Naive thymus-derived CD4-positive, alpha-beta T cell (primary cell): ENCODE measurements at regions of chr13 and their contacts with region 1.

Region 1: GRCh38 chr13:78595495-78596398 is 7.6 kb downstream of the POU4F1 start:
- DNase-seq: peak in 1 of 9 donors; percentile 38
- ATAC-seq: no peak
- H3K4me3 ChIP-seq: no peak overlapping the region
- H3K4me3 Mint-ChIP-seq: peak overlapping the region in 8 of 10 donors; percentile 4 to 50 (median 26)
- H3K27ac ChIP-seq: no peak overlapping the region
- H3K27ac Mint-ChIP-seq: peak overlapping the region in 6 of 9 donors; percentile 25 to 81 (median 60)
- H3K4me1 ChIP-seq: no peaks in the 10 kb centered on the region
- H3K4me1 Mint-ChIP-seq: peaks cover 0 to 23% (median 13%) of the 10 kb centered on the region in 7 donors
- H3K27me3 ChIP-seq: peaks cover 68 to 70% of the 10 kb centered on the region in 2 donors
- H3K27me3 Mint-ChIP-seq: peaks cover 85 to 90% (median 87%) of the 10 kb centered on the region in 5 donors

Region 2: DNA sequence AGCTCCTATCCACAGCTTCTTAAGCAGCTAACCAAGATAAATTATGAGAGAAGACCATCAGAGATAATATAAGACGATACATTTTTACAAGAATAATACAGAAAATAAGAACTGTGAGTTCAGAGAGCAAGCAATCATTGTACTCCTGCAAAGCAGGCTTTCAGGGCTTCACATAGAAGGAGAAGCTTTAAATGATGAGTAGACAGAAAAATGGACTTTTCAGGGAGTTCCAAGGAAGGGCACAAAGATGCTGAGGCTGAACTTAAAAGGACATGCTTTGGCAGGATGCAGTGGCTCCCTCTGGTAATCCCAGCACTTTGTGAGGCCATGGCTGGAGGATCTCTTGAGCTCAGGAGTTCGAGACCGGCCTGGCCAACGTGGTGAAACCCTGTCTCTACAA is 151.9 kb before region 1 on chr13:
- CTCF ChIA-PET with region 1: no interaction called
- POLR2A ChIA-PET with region 1: no interaction called
- intact Hi-C with region 1: no loop called
- DNase-seq: no peak
- ATAC-seq: no peak
- H3K4me3 ChIP-seq: no peak overlapping the region
- H3K4me3 Mint-ChIP-seq: no peak overlapping the region
- H3K27ac ChIP-seq: no peak overlapping the region
- H3K27ac Mint-ChIP-seq: no peak overlapping the region
- H3K4me1 ChIP-seq: no peaks in the 10 kb centered on the region
- H3K4me1 Mint-ChIP-seq: no peaks in the 10 kb centered on the region
- H3K27me3 ChIP-seq: peaks cover 0 to 3% of the 10 kb centered on the region in 2 donors
- H3K27me3 Mint-ChIP-seq: no peaks in the 10 kb centered on the region

Region 3: GRCh38 chr13:78609464-78610205 is 13.9 kb after region 1 on chr13:
- CTCF ChIA-PET with region 1: interaction called, 3 read pairs
- POLR2A ChIA-PET with region 1: interaction called, 6 read pairs
- intact Hi-C with region 1: loop called (anchors 1 to 2 kb)
- DNase-seq: no peak
- ATAC-seq: peak; percentile 25
- H3K4me3 ChIP-seq: peak overlapping the region; percentile 29
- H3K4me3 Mint-ChIP-seq: peak overlapping the region; percentile 49 to 84 (median 76)
- H3K27ac ChIP-seq: no peak overlapping the region
- H3K27ac Mint-ChIP-seq: peak overlapping the region in 1 of 9 donors; percentile 33
- H3K4me1 ChIP-seq: peaks cover 11 to 24% of the 10 kb centered on the region in 2 donors
- H3K4me1 Mint-ChIP-seq: peaks cover 19 to 48% (median 37%) of the 10 kb centered on the region in 7 donors
- H3K27me3 ChIP-seq: peaks cover 19 to 44% of the 10 kb centered on the region in 2 donors
- H3K27me3 Mint-ChIP-seq: peaks cover 61 to 73% (median 65%) of the 10 kb centered on the region in 5 donors

Region 4: DNA sequence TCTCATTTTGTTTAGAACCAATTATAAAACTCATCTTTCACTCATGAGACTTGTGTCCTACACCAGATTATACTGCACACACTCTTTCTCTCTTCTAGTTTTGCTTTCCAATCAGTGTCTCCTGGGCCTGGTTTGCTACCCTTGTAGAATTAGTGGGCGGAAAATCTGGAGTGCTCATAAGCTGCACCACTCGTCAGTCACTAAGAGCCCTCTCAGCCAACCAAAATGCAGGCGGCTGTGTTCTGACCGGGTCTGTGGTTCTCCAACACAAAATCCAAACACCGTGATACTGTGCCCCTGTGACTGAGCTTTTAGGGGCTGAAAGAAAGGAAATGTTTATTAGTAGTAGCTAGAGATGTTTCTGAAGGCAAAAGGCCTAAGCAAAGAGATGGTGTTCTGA is 146.9 kb after region 1 on chr13:
- CTCF ChIA-PET with region 1: no interaction called
- POLR2A ChIA-PET with region 1: no interaction called
- intact Hi-C with region 1: no loop called
- DNase-seq: no peak
- ATAC-seq: no peak
- H3K4me3 ChIP-seq: no peak overlapping the region
- H3K4me3 Mint-ChIP-seq: no peak overlapping the region
- H3K27ac ChIP-seq: no peak overlapping the region
- H3K27ac Mint-ChIP-seq: no peak overlapping the region
- H3K4me1 ChIP-seq: no peaks in the 10 kb centered on the region
- H3K4me1 Mint-ChIP-seq: no peaks in the 10 kb centered on the region
- H3K27me3 ChIP-seq: no peaks in the 10 kb centered on the region
- H3K27me3 Mint-ChIP-seq: peaks cover 0 to 32% (median 21%) of the 10 kb centered on the region in 5 donors

Region 5: DNA sequence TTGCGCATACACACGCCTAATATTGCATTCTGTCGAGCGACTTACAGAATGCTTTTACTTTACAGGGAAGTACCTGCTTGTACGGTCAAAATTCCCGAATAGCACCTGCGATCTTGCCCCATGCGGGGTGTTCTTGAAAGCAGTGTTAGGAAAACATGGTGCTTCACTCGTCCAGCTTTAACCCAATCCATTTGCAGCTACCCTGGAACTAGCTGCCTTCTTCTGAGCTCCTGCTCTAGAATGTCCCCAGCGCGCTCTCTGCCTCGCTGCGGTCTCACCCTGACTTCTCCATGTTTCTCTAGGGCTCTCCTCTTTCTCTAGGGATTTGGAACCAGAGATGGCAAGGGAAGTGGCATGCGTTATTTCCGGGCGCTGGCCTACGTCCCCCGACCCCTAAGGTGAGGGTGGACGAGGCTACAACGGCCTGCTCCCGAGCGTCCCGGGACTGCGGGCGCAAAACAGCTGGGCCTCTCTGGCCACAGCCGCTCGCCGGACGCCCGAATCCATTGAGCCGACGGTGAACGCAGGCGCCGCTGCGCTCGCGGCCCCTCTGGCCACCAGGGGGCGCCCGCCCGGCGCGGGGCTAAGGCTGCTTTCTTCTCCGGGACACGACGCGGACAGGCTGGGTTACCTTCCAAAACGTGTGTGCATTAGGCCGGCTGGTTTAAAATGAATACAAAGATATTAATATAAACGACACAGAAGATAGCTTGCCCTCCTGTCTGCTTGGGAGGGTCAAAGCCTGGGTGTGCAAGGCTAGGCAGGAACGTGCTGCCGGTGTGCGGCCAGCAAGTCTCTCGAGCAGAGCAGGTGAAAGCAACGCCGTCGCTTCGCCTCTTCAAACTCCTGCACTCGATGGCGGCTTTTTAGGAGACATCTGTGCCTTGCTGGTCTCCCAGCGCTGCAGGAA is 1747.0 kb after region 1 on chr13:
- CTCF ChIA-PET with region 1: no interaction called
- POLR2A ChIA-PET with region 1: no interaction called
- intact Hi-C with region 1: loop called in 1 of 2 experiments (anchors 5 kb)
- DNase-seq: peak in 8 of 9 donors; percentile 33 to 83 (median 66)
- ATAC-seq: peak; percentile 79
- H3K4me3 ChIP-seq: peak overlapping the region; percentile 61
- H3K4me3 Mint-ChIP-seq: peak overlapping the region in 7 of 10 donors; percentile 49 to 90 (median 83)
- H3K27ac ChIP-seq: no peak overlapping the region
- H3K27ac Mint-ChIP-seq: peak overlapping the region in 1 of 9 donors; percentile 9
- H3K4me1 ChIP-seq: peaks cover 5 to 11% of the 10 kb centered on the region in 2 donors
- H3K4me1 Mint-ChIP-seq: peaks cover 13 to 28% (median 25%) of the 10 kb centered on the region in 7 donors
- H3K27me3 ChIP-seq: peaks cover 0 to 6% of the 10 kb centered on the region in 2 donors
- H3K27me3 Mint-ChIP-seq: peaks cover 26 to 48% (median 35%) of the 10 kb centered on the region in 5 donors